ENCODE measurements at regions of chr6 and their contacts with region 1.

Region 1: DNA sequence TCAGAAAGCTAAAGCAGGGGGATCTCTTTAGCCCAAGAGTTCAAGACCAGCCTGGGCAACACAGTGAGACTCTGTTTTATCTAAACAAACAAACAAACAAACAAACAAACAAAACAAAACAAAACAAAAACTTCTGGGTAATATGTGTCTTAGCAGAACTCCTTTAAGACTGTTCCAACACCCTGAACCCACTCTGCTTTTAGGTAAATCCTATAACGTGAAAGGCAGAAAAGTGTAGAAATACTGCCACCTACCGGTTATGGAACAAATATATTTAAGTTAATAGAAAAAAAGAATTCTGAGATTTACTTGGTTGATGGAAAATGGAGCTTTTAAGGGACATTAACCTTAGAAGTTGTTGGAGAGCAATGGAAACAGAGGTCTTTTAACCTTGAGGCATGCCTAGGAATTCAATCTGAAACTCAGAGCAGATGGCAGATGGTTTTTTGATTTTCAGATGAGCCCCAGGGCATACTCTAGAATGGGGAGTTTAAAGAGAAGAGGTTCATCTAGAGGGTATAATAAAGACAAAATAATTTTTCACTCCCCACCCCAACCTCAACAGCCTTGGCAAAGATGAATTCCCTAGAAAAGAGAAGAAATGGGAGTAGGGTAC is 38.5 kb downstream of the SOD2 start:
- DNase-seq: peak in 1 of 3 donors; percentile 6
- ATAC-seq: peak; percentile 37
- H3K4me3 ChIP-seq: no peak overlapping the region
- H3K4me1 ChIP-seq: no peaks in the 10 kb centered on the region
- CTCF ChIP-seq: peak; percentile 22

Region 2: DNA sequence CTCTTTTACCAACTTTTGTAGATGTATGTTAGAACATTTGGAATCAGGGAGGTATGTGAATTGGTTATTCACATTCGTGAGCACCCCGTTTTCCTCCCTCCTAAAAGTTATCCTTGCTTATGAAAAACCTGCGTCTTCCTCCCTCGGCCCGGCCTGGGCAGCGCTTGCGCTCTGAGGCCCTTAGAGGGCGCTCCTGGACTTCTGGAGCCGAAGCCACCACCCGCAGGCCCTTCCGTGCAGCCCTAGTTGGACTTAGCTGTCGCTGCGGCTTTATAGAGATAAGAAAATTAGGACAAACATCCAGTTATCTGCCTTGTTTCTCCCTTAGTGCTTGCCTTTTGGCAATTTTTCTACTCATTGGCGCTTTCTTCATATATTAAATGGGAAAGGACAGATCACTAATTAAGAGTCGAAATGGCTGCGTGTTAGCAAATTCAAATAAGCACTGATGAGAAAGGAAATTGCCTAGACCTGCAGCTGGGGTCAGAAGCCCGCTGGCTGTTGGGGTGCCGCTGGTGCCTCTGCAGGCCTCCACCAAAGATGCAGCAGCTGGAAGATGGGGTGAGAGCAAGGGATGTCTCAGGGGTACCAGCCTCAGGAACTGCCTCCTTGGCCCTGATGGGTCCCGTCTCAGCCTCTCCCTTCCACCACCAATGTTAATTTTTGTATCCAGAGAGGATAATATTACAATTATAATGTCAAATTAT is 480.2 kb before region 1 on chr6:
- intact Hi-C with region 1: loop called (anchors 5 to 10 kb)
- DNase-seq: peak; percentile 63 to 73 (median 73)
- ATAC-seq: peak; percentile 85
- H3K4me3 ChIP-seq: no peak overlapping the region
- H3K4me1 ChIP-seq: peaks cover 7% of the 10 kb centered on the region
- CTCF ChIP-seq: peak; percentile 84